GM18951 (cell line): ENCODE measurements at regions of chr16 and their contacts with region 1.

Region 1: GRCh38 chr16:87778830-87779579 is 13.2 kb upstream of the KLHDC4 start:
- POLR2A ChIP-seq: peak; percentile 29

Region 2: GRCh38 chr16:87877938-87878507 is 99.0 kb after region 1 on chr16:
- in situ Hi-C with region 1: loop called (anchors 10 kb)
- POLR2A ChIP-seq: no peak